IMR-90 (cell line): ENCODE measurements at regions of chr5 and their contacts with region 1.

Region 1: GRCh38 chr5:124697933-124698591 is 48.4 kb downstream of the ZNF608 start:
- DNase-seq: peak; percentile 32
- ATAC-seq: peak; percentile 76
- H3K4me3 ChIP-seq: no peak overlapping the region
- H3K27ac ChIP-seq: peak overlapping the region; percentile 66; the same call in 1 of the 2 replicates
- H3K4me1 ChIP-seq: peaks cover 4% of the 10 kb centered on the region
- H3K27me3 ChIP-seq: no peaks in the 10 kb centered on the region
- CTCF ChIP-seq: no peak
- POLR2A ChIP-seq: no peak
- RAD21 ChIP-seq: no peak

Region 2: GRCh38 chr5:124729720-124730359 is 31.8 kb after region 1 on chr5:
- CTCF ChIA-PET with region 1: no interaction called
- POLR2A ChIA-PET with region 1: no interaction called
- dilution Hi-C with region 1: no loop called
- in situ Hi-C with region 1: no loop called
- intact Hi-C with region 1: loop called (anchors 5 kb)
- DNase-seq: no peak
- ATAC-seq: no peak; the same call in 1 of the 2 replicates
- H3K4me3 ChIP-seq: no peak overlapping the region
- H3K27ac ChIP-seq: no peak overlapping the region
- H3K4me1 ChIP-seq: peaks cover 8% of the 10 kb centered on the region; the same call in 1 of the 2 replicates
- H3K27me3 ChIP-seq: no peaks in the 10 kb centered on the region; the same call in 1 of the 2 replicates
- CTCF ChIP-seq: no peak
- POLR2A ChIP-seq: no peak
- RAD21 ChIP-seq: no peak